ENCODE measurements at regions of chr12 and their contacts with region 1.

Region 1: GRCh38 chr12:52004042-52004648 is 2.6 kb upstream of the TAMALIN start:
- DNase-seq: no peak
- H3K4me3 ChIP-seq: no peak overlapping the region
- CTCF ChIP-seq: peak; percentile 79

Region 2: DNA sequence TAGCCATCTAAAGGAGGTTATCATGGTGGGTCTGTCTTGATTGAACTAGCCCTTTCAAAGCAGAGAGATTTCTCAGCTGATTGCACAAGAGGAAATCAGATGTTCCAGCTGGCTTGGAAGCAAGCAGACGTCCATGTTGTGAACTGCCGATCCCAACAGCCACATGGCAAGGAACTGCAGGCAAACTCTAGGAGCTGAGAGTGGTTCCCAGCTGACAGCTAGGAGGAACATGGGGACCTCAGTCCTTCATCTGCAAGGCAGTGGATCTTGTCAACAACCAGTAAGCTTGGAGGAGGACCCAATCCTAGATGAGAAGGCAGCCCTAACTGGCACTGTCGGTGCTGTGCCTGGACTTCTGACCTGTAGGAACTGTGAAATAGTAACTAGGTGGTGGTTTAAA is 44.9 kb before region 1 on chr12:
- CTCF ChIA-PET with region 1: no interaction called
- POLR2A ChIA-PET with region 1: no interaction called
- DNase-seq: no peak
- H3K4me3 ChIP-seq: no peak overlapping the region
- CTCF ChIP-seq: no peak

Region 3: DNA sequence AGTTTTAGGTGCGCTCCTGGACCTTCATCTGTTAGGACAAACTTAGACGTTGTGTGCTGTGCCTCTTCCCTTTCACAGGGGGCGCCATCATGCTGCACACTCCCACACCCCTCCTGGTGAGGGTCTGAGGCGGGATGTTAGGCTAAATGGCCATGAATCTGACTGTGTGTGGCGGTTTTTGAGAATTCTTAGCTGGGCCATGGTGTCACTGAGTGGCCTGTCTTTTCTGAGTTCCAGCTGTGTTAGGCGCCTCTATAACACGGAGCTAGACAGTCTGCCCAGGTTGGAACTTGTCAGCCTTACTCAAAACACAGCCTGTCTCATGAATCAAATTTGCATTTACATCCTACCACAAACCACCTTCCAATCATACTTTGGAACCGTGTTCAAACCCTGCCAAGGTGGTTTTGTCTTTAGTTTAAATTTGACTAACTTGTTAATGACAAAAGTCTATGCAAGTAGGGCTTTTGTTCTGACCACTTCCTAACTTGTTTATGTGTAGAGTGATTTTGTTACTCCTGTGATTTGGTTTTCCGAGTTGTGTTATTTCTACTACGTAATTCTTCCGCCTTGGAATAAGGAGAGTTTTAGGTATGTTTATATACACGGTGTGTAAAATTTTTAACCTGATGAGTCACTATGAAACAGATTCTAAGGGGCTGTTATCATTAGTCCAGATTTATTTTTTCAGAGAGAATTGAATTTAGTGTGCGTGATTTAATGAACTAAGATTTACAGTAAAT is 33.1 kb before region 1 on chr12:
- CTCF ChIA-PET with region 1: interaction called, 10 read pairs
- POLR2A ChIA-PET with region 1: no interaction called
- DNase-seq: no peak
- H3K4me3 ChIP-seq: no peak overlapping the region
- CTCF ChIP-seq: peak; percentile 61

Region 4: DNA sequence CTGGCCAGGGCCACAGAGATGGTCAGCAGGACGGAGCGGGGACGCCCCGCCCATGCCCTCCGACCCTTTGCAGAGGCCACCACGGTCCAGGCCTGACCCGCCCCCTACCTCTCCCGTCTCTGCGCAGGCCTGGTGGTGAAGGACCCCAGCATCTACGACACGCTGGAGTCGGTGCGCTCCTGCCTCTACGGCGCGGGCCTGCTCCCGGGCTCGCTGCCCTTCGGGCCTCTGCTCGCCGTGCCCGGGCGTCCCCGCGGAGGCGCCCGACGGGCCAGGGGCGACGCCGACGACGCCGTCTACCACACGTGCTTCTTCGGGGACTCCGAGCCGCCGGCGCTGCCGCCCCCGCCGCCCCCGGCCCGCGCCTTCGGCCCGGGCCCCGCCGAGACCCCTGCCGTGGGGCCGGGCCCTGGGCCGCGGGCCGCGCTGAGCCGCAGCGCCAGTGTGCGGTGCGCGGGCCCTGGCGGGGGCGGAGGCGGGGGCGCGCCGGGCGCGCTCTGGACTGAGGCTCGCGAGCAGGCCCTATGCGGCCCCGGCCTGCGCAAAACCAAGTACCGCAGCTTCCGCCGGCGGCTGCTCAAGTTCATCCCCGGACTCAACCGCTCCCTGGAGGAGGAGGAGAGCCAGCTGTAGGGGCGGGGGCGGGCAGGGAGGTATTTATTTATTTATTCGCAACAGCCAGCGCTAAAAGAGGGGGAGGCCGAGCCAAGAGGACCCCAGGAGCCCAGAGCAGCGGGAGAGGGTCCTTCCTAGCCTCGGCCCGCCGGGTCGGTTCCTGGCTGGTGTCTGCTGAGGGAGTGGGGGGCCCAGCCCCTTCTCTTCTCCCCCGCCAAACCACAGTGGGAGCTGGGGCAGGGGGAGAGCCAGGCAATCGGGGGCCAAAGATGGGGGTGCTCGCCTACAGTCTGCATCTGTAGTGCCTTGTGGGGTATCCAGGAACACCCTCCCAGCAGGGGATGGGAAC is 10.7 kb after region 1 on chr12:
- CTCF ChIA-PET with region 1: interaction called, 1,081 read pairs
- POLR2A ChIA-PET with region 1: interaction called, 3 read pairs
- DNase-seq: no peak
- H3K4me3 ChIP-seq: no peak overlapping the region
- CTCF ChIP-seq: no peak

Region 5: GRCh38 chr12:52082988-52083637 is 79.0 kb after region 1 on chr12:
- CTCF ChIA-PET with region 1: interaction called, 29 read pairs
- POLR2A ChIA-PET with region 1: no interaction called
- DNase-seq: no peak
- H3K4me3 ChIP-seq: no peak overlapping the region
- CTCF ChIP-seq: peak; percentile 99